HepG2 (cell line): ENCODE measurements at regions of chr1 and their contacts with region 1.

Region 1: DNA sequence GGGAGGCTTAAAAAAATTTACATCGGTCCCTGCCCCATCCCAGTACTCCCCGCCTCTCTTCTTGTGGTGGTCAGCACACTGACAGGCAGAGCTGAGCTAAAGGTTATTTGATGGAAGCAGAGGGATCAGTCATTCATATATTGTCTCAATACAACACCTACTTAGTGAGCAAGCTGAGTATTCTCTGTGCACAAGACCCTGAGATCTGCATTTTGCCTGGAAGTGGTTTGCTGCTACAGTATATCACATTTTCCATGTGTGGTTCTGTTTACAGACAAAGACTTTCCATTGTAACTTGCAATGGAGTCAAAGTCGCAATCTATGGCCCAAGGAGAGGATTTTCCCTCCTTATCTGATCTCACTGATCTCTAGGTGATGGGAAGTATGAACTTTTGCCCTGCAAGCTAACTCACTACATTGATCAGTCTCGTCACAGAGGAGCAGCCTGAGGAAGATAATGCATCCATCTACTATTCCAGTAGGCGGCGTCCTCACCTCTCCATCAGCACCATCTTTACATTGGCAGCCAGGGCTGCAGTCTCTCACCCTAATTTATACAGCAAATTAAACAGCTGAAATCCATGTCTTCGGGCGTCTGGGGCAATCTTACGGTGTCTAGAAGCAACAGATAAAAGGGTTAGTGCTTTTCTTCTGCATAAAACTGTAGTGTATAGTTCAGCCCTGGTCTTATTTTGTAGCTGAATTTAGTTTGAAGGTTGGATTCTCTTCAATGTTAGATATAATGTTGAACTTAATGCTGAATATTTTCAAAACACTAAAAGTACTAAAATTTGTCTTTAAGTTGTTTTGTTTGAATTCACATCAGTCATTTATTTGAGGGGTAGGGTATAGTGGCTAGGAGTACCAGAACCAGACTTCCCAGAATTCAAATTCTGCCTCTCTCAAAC is 3.2 kb upstream of the TRAF5 start:
- DNase-seq: peak; percentile 37
- ATAC-seq: peak; percentile 84
- H3K4me3 ChIP-seq: no peak overlapping the region
- H3K27ac ChIP-seq: no peak overlapping the region
- H3K4me1 ChIP-seq: peaks cover 16% of the 10 kb centered on the region; the same call in 1 of the 2 replicates
- H3K27me3 ChIP-seq: peaks cover 0 to 28% of the 10 kb centered on the region in 2 experiments; a peak in 4 of 5 replicates
- CTCF ChIP-seq: peak; percentile 89
- EP300 ChIP-seq: no peak
- POLR2A ChIP-seq: no peak
- RAD21 ChIP-seq: peak; percentile 61; the same call in 1 of the 2 replicates

Region 2: DNA sequence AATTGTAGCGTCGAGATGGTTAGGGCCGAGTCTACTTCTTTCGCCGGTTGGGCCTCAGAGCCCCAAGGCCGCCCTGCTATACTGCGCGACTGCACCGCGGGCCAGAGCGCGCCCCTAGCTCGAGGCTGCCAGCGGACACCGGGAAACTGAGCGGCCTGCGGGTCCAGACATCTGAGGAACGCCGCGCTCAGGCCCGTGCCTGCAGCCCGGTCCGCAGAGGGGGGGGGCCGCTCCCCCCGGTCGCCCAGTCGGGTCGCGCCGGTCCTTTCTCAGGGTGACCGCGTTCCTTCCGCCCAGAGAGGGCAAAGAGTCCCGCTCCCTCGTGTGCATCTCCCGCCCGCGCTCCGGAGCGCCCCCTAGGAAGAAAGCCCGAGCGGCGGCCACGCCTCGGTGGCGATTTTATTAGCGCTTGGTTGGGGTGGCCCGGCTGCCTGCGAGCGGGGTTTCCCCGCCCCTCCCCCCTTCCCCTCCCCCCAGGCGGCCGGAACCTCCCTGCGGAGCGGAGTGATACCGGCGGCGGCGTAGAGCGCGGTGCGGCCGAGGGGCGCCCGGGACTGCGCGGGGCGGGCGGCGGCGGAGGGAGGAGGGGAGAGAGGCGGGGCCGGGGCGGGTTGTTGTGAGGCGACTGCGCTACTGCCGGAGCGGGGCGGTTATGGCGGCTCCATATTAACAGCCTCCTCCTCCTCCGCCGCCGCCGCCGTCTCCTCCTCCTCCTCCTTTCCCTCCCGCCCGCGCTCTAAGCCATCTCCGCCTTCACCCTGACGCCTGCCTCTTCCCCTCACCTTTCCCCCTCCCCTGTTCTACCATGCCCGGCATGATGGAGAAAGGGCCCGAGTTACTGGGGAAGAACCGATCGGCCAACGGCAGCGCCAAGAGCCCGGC is 64.4 kb before region 1 on chr1 and contains the start of gene RCOR3:
- CTCF ChIA-PET with region 1: no interaction called
- POLR2A ChIA-PET with region 1: no interaction called
- in situ Hi-C with region 1: no loop called
- intact Hi-C with region 1: loop called (anchors 5 kb)
- DNase-seq: peak; percentile 82
- ATAC-seq: peak; percentile 79
- H3K4me3 ChIP-seq: peak within 1 kb of the TSS; percentile 93 to 97 (median 94)
- H3K27ac ChIP-seq: peak within 1 kb of the TSS; percentile 98
- H3K4me1 ChIP-seq: peaks cover 26% of the 10 kb centered on the region; the same call in 1 of the 2 replicates
- H3K27me3 ChIP-seq: no peaks in the 10 kb centered on the region; a peak in 1 of 5 replicates
- CTCF ChIP-seq: peak; percentile 85
- EP300 ChIP-seq: peak in 1 of 2 experiments; percentile 57; a peak in 1 of 4 replicates
- POLR2A ChIP-seq: peak; percentile 67 to 71; a peak in 3 of 4 replicates
- RAD21 ChIP-seq: 0 out of 2 replicates have a peak, but pooled peaks have one; percentile 24
- total RNA-seq, gene RCOR3: 9.6 and 16.8 TPM in 2 replicates

Region 3: DNA sequence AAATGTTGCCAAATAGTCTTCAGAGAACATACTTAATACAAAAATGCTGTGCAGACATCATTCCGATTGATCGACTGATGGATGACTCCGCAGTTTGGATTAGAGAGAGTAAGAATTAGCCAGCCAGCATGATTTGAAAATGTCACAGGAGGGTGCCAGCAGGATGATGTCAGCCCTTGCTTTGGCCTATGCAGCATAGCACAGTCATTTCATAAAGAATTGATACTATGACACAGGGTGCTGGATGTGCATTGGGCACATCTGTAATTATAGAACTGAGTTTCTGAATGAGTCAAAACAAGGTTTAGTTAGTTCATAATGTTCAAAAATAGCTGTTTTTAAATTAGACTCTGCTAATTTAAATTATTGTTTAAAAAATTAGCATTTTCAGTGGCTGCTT is 18.4 kb before region 1 on chr1:
- CTCF ChIA-PET with region 1: no interaction called
- POLR2A ChIA-PET with region 1: no interaction called
- in situ Hi-C with region 1: no loop called
- intact Hi-C with region 1: no loop called
- DNase-seq: no peak
- ATAC-seq: no peak
- H3K4me3 ChIP-seq: no peak overlapping the region
- H3K27ac ChIP-seq: no peak overlapping the region
- H3K4me1 ChIP-seq: no peaks in the 10 kb centered on the region
- H3K27me3 ChIP-seq: no peaks in the 10 kb centered on the region
- CTCF ChIP-seq: no peak
- EP300 ChIP-seq: no peak
- POLR2A ChIP-seq: no peak
- RAD21 ChIP-seq: no peak

Region 4: DNA sequence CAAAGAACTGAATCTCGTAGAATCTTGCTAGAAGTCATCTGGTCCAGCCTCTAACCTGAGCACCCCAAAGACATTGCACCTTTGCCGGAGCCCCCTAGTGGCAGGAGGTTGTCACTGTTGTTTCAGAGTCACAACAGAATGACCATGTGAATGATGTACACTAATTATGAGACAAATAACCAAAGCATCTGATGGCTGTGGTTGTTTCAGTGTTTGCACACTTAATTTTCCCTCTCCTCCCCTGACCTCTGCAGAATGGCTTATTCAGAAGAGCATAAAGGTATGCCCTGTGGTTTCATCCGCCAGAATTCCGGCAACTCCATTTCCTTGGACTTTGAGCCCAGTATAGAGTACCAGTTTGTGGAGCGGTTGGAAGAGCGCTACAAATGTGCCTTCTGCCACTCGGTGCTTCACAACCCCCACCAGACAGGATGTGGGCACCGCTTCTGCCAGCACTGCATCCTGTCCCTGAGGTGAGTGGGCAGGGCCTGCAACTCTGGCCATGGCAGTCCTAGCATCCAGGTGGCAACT is 29.6 kb after region 1 on chr1:
- CTCF ChIA-PET with region 1: no interaction called
- POLR2A ChIA-PET with region 1: no interaction called
- in situ Hi-C with region 1: no loop called
- intact Hi-C with region 1: loop called (anchors 2 kb)
- DNase-seq: peak; percentile 79
- ATAC-seq: peak; percentile 84
- H3K4me3 ChIP-seq: peak overlapping the region in 1 of 3 experiments; percentile 32; a peak in 2 of 6 replicates
- H3K27ac ChIP-seq: no peak overlapping the region
- H3K4me1 ChIP-seq: peaks cover 39% of the 10 kb centered on the region
- H3K27me3 ChIP-seq: no peaks in the 10 kb centered on the region
- CTCF ChIP-seq: peak; percentile 75
- EP300 ChIP-seq: no peak
- POLR2A ChIP-seq: no peak
- RAD21 ChIP-seq: no peak

Region 5: DNA sequence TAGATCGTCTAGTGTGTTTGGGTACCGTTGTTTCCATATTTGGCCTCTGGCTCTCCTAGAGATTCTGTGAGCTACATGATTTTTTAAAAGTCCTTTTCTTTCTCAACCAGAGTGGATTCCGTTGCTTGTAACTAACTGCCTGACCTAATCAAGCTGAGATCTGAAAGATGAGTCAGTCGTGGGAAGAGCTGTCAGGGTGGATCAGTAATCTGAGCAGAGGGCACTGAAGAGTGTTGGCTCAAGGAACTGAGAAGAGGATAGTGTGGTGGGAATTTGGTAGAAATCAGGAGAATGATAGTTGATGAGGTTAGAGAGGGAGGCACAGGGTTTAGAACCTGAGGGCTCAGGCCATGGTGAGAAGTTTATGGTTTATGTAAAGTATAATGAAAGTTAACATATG is 55.4 kb after region 1 on chr1:
- CTCF ChIA-PET with region 1: no interaction called
- POLR2A ChIA-PET with region 1: interaction called, 3 read pairs
- in situ Hi-C with region 1: no loop called
- intact Hi-C with region 1: loop called (anchors 5 kb)
- DNase-seq: no peak
- ATAC-seq: no peak
- H3K4me3 ChIP-seq: no peak overlapping the region
- H3K27ac ChIP-seq: no peak overlapping the region
- H3K4me1 ChIP-seq: peaks cover 38% of the 10 kb centered on the region
- H3K27me3 ChIP-seq: no peaks in the 10 kb centered on the region; a peak in 1 of 5 replicates
- CTCF ChIP-seq: no peak
- EP300 ChIP-seq: no peak
- POLR2A ChIP-seq: no peak
- RAD21 ChIP-seq: no peak

Region 6: DNA sequence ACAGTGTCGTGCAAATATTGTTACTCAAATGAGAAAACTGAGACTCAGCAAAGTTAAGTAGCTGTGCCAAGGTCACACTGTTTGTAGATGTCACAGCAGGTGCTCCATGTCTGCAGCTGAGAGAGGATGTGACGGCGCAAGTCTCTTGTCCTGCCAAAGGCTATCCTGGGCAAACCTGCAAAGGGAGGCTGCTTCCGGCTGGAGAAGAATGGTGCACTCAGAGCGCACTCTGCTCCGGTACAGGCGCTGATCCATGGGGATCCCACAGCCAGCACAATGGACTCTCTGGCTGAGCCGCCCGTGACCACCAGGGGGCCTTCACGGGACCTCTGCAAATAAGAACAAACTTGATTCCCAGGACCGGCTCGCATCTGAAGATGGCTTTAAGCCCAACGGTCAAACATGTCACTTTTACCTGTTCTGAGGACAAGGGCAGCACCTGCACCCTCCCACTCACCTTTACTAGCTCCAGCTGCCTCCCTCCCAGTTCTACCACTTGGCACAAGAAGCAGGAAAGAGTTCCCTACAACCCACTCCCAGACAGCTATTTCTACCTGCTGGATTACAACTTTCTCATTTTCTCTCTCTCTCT is 146.6 kb after region 1 on chr1:
- CTCF ChIA-PET with region 1: no interaction called
- POLR2A ChIA-PET with region 1: no interaction called
- in situ Hi-C with region 1: no loop called
- intact Hi-C with region 1: loop called (anchors 2 kb)
- DNase-seq: peak; percentile 72
- ATAC-seq: peak; percentile 100
- H3K4me3 ChIP-seq: no peak overlapping the region
- H3K27ac ChIP-seq: no peak overlapping the region
- H3K4me1 ChIP-seq: peaks cover 6% of the 10 kb centered on the region; the same call in 1 of the 2 replicates
- H3K27me3 ChIP-seq: peaks cover 0 to 12% of the 10 kb centered on the region in 2 experiments; a peak in 2 of 5 replicates
- CTCF ChIP-seq: peak; percentile 91
- EP300 ChIP-seq: no peak
- POLR2A ChIP-seq: no peak
- RAD21 ChIP-seq: peak; percentile 50

Region 7: GRCh38 chr1:211492511-211493132 is 169.2 kb after region 1 on chr1:
- CTCF ChIA-PET with region 1: no interaction called
- POLR2A ChIA-PET with region 1: no interaction called
- in situ Hi-C with region 1: no loop called
- intact Hi-C with region 1: no loop called
- DNase-seq: no peak
- ATAC-seq: no peak
- H3K4me3 ChIP-seq: no peak overlapping the region
- H3K27ac ChIP-seq: no peak overlapping the region
- H3K4me1 ChIP-seq: no peaks in the 10 kb centered on the region
- H3K27me3 ChIP-seq: peaks cover 6 to 57% of the 10 kb centered on the region in 2 experiments; a peak in 4 of 5 replicates
- CTCF ChIP-seq: no peak
- EP300 ChIP-seq: no peak
- POLR2A ChIP-seq: no peak
- RAD21 ChIP-seq: no peak

Region 8: GRCh38 chr1:211514030-211514754 is 190.8 kb after region 1 on chr1:
- CTCF ChIA-PET with region 1: interaction called, 4 read pairs
- POLR2A ChIA-PET with region 1: no interaction called
- in situ Hi-C with region 1: loop called (anchors 10 kb)
- intact Hi-C with region 1: loop called (anchors 1 kb)
- DNase-seq: peak; percentile 82
- ATAC-seq: peak; percentile 82
- H3K4me3 ChIP-seq: peak overlapping the region in 1 of 3 experiments; percentile 60; a peak in 2 of 6 replicates
- H3K27ac ChIP-seq: no peak overlapping the region
- H3K4me1 ChIP-seq: peaks cover 49% of the 10 kb centered on the region
- H3K27me3 ChIP-seq: peaks cover 0 to 12% of the 10 kb centered on the region in 2 experiments; a peak in 2 of 5 replicates
- CTCF ChIP-seq: peak; percentile 95
- EP300 ChIP-seq: no peak
- POLR2A ChIP-seq: no peak
- RAD21 ChIP-seq: peak; percentile 81

Region 9: GRCh38 chr1:211654838-211655787 is 331.7 kb after region 1 on chr1:
- CTCF ChIA-PET with region 1: interaction called, 4 read pairs
- POLR2A ChIA-PET with region 1: no interaction called
- in situ Hi-C with region 1: loop called (anchors 10 kb)
- intact Hi-C with region 1: loop called (anchors 5 kb)
- DNase-seq: peak; percentile 69
- ATAC-seq: peak; percentile 95
- H3K4me3 ChIP-seq: no peak overlapping the region
- H3K27ac ChIP-seq: no peak overlapping the region
- H3K4me1 ChIP-seq: peaks cover 41% of the 10 kb centered on the region
- H3K27me3 ChIP-seq: no peaks in the 10 kb centered on the region; a peak in 1 of 5 replicates
- CTCF ChIP-seq: peak; percentile 94
- EP300 ChIP-seq: no peak
- POLR2A ChIP-seq: no peak
- RAD21 ChIP-seq: peak; percentile 92